Psoas muscle (tissue), 8 donors: ENCODE measurements at regions of chr15 and their contacts with region 1.

Region 1: DNA sequence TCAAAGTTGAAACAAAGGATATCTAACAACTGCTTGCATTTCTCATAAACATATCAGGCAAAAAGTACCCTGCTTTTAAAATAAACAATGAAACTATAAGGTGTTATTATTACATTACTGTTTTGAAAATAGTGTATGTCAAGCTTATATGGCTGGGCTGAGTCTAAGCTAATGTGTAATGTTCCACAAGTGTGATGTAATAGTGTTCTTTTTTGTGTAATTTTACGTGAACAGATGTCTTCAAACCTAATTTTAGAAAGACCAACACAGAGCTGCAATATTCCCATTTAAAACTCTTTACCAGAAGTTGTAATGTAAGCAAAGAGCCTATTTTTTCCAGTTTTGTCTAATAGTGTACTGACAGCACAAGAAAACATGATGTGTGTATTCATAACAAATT is 34.0 kb downstream of the MINDY2 start:
- DNase-seq: no peak
- ATAC-seq: no peak
- H3K4me3 ChIP-seq: no peak overlapping the region
- H3K27ac ChIP-seq: no peak overlapping the region
- H3K4me1 ChIP-seq: no peaks in the 10 kb centered on the region
- H3K27me3 ChIP-seq: no peaks in the 10 kb centered on the region
- CTCF ChIP-seq: no peak

Region 2: DNA sequence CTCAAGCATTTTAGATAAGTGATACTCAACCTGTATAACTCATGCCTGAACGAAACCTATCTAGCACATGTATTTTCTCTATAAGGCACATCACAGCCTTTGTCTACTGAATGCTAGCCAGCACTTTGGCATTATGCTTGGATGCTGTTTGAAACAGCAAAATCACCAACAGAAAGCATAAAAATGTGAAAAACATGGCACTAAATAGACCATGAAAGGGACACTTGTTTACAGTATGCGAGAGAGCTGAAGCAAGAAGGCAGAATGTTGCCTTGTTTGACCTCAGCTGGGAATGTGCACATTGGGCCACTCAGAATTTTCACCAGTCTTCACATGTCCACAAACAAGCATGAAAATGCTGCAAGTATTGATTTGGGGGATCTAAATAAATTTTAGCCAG is 25.5 kb after region 1 on chr15:
- intact Hi-C with region 1: loop called in 1 of 2 experiments (anchors 2 kb)
- DNase-seq: no peak
- ATAC-seq: no peak
- H3K4me3 ChIP-seq: no peak overlapping the region
- H3K27ac ChIP-seq: no peak overlapping the region
- H3K4me1 ChIP-seq: no peaks in the 10 kb centered on the region
- H3K27me3 ChIP-seq: no peaks in the 10 kb centered on the region
- CTCF ChIP-seq: no peak

Region 3: DNA sequence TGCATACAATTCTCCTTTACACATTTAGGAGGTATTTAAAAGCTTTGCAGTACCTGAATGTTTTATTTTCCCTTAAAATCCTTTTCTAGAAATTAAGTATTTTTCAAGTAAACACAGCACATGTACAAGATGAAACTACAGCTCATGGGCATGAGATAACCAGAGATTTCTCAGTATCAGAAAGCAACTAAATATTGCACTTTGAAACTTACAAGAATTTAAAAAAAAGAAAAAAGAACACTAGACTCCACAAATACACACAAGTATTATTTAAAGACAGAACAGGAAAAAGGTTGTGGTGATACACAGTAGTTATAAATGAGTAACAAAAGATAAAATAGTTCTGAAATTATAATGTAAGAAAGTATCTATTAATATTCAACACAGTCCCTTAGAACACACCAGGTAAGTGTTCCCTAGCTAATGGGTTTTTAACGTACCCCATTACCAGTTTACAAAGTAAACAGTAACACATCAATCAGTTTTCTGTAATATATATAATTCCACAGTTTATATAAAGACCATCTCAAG is 93.1 kb after region 1 on chr15:
- intact Hi-C with region 1: no loop called
- DNase-seq: no peak
- ATAC-seq: no peak
- H3K4me3 ChIP-seq: no peak overlapping the region
- H3K27ac ChIP-seq: no peak overlapping the region
- H3K4me1 ChIP-seq: no peaks in the 10 kb centered on the region
- H3K27me3 ChIP-seq: no peaks in the 10 kb centered on the region
- CTCF ChIP-seq: no peak